ENCODE measurements at regions of chr14 and their contacts with region 1.

Region 1: DNA sequence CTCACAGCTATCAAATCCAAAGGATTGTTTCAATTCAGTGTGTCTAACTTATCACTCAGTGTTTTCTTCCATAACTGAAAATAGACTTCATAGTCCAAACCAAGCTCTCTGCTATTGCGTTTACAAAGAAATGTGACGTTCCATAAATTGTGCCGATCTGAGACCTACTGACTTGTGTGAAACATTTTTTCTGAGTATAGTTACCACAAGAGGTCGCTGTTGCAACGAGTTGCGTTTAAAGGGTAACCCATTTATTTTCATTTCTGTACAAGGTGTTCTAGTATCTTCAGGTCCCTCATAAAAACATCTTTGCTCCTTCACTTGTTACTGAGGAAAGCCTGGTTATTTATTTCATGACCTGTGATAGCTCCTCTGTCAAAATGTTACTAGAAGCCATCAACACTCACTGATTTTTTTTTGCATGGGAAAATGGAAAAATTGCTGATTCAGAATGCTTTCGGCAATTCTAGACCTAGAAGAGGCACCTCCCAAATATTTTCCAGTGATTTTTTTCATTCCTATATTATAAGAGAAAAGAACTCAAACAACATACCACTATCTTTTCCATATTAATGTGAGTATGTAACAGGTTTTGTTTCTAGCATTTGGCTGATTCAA is 60.9 kb upstream of the OR4E1 start:
- DNase-seq: peak; percentile 77 to 90 (median 86)
- H3K4me3 ChIP-seq: peak overlapping the region in 2 of 7 experiments; percentile 43 to 57
- H3K27ac ChIP-seq: no peak overlapping the region
- H3K4me1 ChIP-seq: peaks cover 0 to 5% (median 0%) of the 10 kb centered on the region in 4 experiments
- H3K27me3 ChIP-seq: peaks cover 0 to 2% (median 0%) of the 10 kb centered on the region in 5 experiments

Region 2: DNA sequence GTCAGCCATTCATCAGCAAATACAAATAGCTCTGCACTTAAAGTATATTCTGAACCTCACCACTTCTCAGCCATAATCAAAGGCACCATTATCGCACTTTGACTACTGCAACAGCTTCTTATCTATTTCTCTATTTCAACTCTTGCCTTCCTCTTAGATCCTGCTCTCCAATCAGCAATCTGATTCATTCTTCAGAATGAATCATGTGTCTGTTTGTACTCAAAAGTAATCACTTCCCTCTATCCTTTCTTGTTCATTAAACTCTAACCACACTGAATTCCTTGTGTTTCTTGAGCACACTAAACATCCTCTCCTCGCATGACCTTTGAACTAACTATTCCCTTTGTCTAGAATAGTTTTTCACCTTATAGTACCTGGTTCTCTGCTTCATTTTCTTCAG is 48.1 kb before region 1 on chr14:
- CTCF ChIA-PET with region 1: no interaction called
- POLR2A ChIA-PET with region 1: no interaction called
- DNase-seq: no peak
- H3K4me3 ChIP-seq: no peak overlapping the region
- H3K27ac ChIP-seq: no peak overlapping the region
- H3K4me1 ChIP-seq: no peaks in the 10 kb centered on the region
- H3K27me3 ChIP-seq: peaks cover 0 to 6% (median 2%) of the 10 kb centered on the region in 5 experiments

Region 3: DNA sequence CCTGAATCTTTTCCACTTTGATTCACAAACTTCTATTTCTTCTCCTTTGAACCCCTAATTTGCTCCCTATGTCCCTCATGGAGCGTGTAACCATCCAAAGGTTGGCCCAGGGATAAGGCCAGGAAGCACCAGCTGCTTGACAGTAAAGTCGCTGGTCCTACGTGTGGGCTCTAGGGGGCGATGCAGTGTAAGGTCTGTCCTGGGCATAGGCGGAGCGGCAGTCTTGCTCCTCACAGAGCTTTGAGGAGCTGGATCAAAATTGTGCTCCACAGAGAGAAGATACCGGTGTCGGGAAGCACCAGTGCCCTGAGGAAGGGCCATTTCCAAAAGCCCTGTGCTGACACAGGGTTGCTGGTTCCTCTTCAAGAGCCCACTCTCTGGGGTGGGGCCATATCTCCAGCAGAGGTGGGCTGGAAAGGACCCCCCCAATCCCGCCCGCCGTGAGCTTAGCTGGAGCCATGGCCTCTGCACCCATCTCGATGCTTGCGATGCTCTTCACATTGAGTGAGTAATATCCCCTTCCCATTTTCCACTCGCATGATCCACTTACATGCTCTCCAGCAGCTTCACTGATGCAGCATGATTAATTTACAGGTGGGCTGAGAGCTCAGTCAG is 11.0 kb before region 1 on chr14:
- CTCF ChIA-PET with region 1: interaction called, 19 read pairs
- POLR2A ChIA-PET with region 1: no interaction called
- DNase-seq: peak; percentile 35 to 64 (median 63)
- H3K4me3 ChIP-seq: no peak overlapping the region
- H3K27ac ChIP-seq: no peak overlapping the region
- H3K4me1 ChIP-seq: no peaks in the 10 kb centered on the region
- H3K27me3 ChIP-seq: peaks cover 0 to 9% (median 4%) of the 10 kb centered on the region in 5 experiments

Region 4: GRCh38 chr14:21748869-21749303 is 14.3 kb after region 1 on chr14:
- CTCF ChIA-PET with region 1: interaction called, 17 read pairs
- POLR2A ChIA-PET with region 1: no interaction called
- DNase-seq: peak; percentile 54 to 81 (median 79)
- H3K4me3 ChIP-seq: peak overlapping the region in 5 of 7 experiments; percentile 29 to 52 (median 41)
- H3K27ac ChIP-seq: no peak overlapping the region
- H3K4me1 ChIP-seq: peaks cover 0 to 4% (median 1%) of the 10 kb centered on the region in 4 experiments
- H3K27me3 ChIP-seq: peaks cover 0 to 2% (median 0%) of the 10 kb centered on the region in 5 experiments

Measured in common myeloid progenitor, CD34-positive (primary cell).